ENCODE measurements at regions of chr14 and their contacts with region 1.

Region 1: GRCh38 chr14:73759714-73760597 is 45.8 kb upstream of the PNMA1 start:
- DNase-seq: peak; percentile 96
- ATAC-seq: peak; percentile 86
- H3K4me3 ChIP-seq: peak overlapping the region; percentile 59 to 83 (median 79); a peak in 5 of 6 replicates
- H3K27ac ChIP-seq: peak overlapping the region; percentile 95
- H3K4me1 ChIP-seq: peaks cover 86% of the 10 kb centered on the region
- H3K27me3 ChIP-seq: no peaks in the 10 kb centered on the region
- CTCF ChIP-seq: peak; percentile 21
- EP300 ChIP-seq: peak; percentile 6 to 57
- POLR2A ChIP-seq: peak; percentile 70 to 77; a peak in 3 of 4 replicates
- RAD21 ChIP-seq: peak; percentile 35; the same call in 1 of the 2 replicates

Region 2: GRCh38 chr14:73741386-73741875 is 18.5 kb before region 1 on chr14:
- CTCF ChIA-PET with region 1: no interaction called
- POLR2A ChIA-PET with region 1: interaction called, 26 read pairs
- in situ Hi-C with region 1: no loop called
- intact Hi-C with region 1: no loop called
- DNase-seq: peak; percentile 61
- ATAC-seq: peak; percentile 72
- H3K4me3 ChIP-seq: peak overlapping the region; percentile 37 to 60 (median 41)
- H3K27ac ChIP-seq: peak overlapping the region; percentile 61
- H3K4me1 ChIP-seq: peaks cover 70% of the 10 kb centered on the region
- H3K27me3 ChIP-seq: no peaks in the 10 kb centered on the region
- CTCF ChIP-seq: peak; percentile 19; the same call in 1 of the 2 replicates
- EP300 ChIP-seq: no peak
- POLR2A ChIP-seq: no peak
- RAD21 ChIP-seq: no peak

Region 3: GRCh38 chr14:73785873-73786695 is 26.1 kb after region 1 on chr14:
- CTCF ChIA-PET with region 1: no interaction called
- POLR2A ChIA-PET with region 1: interaction called, 115 read pairs
- in situ Hi-C with region 1: no loop called
- intact Hi-C with region 1: loop called (anchors 2 kb)
- DNase-seq: peak; percentile 95
- ATAC-seq: peak; percentile 87
- H3K4me3 ChIP-seq: peak overlapping the region; percentile 76 to 80 (median 79)
- H3K27ac ChIP-seq: peak overlapping the region; percentile 86
- H3K4me1 ChIP-seq: peaks cover 70% of the 10 kb centered on the region
- H3K27me3 ChIP-seq: no peaks in the 10 kb centered on the region; a peak in 1 of 5 replicates
- CTCF ChIP-seq: peak; percentile 36; the same call in 1 of the 2 replicates
- EP300 ChIP-seq: peak; percentile 81 to 87; a peak in 3 of 4 replicates
- POLR2A ChIP-seq: peak; percentile 84 to 86
- RAD21 ChIP-seq: peak; percentile 60

Region 4: DNA sequence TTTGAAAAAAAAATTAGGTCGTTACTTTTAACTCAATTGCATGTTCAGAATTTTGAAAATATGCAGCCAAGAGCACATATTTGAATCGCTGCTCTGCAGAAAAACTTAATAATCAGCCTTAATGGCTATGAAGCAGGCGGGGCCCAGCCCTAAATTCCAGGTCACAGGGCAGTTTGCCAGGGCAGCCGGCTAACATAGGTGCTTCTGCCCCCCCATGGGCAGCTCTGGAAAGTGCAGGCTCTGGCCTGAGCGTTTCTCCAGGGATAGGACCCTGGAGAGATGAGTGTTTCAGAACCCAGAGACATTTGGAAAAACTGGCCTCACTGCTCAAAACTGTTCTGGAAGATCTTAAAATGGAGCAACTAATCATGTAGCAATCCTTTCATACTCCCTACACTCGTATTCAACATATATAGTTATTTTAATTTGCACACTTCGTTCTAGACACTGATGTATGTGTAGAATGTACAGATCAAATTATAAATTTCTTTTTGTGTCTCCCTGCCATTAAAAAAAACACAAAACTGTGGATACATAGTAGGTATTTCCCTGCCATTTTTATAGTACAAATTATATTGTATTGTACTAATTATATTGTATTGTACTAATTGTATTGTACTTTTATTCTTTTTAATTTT is 65.7 kb after region 1 on chr14:
- CTCF ChIA-PET with region 1: no interaction called
- POLR2A ChIA-PET with region 1: no interaction called
- in situ Hi-C with region 1: loop called (anchors 10 kb)
- intact Hi-C with region 1: no loop called
- DNase-seq: peak; percentile 69
- ATAC-seq: peak; percentile 92
- H3K4me3 ChIP-seq: no peak overlapping the region
- H3K27ac ChIP-seq: no peak overlapping the region
- H3K4me1 ChIP-seq: peaks cover 15% of the 10 kb centered on the region
- H3K27me3 ChIP-seq: peaks cover 0 to 2% of the 10 kb centered on the region in 2 experiments; a peak in 2 of 5 replicates
- CTCF ChIP-seq: peak; percentile 90
- EP300 ChIP-seq: no peak
- POLR2A ChIP-seq: no peak
- RAD21 ChIP-seq: peak; percentile 94

Region 5: GRCh38 chr14:73851644-73852382 is 91.9 kb after region 1 on chr14 and contains the start of gene PTGR2:
- CTCF ChIA-PET with region 1: no interaction called
- POLR2A ChIA-PET with region 1: interaction called, 19 read pairs
- in situ Hi-C with region 1: no loop called
- intact Hi-C with region 1: no loop called
- DNase-seq: peak; percentile 97
- ATAC-seq: peak; percentile 91
- H3K4me3 ChIP-seq: peak within 1 kb of the TSS; percentile 72 to 75 (median 72)
- H3K27ac ChIP-seq: peak within 1 kb of the TSS; percentile 95
- H3K4me1 ChIP-seq: peaks cover 46% of the 10 kb centered on the region
- H3K27me3 ChIP-seq: no peaks in the 10 kb centered on the region
- CTCF ChIP-seq: no peak
- EP300 ChIP-seq: no peak; a peak in 2 of 4 replicates
- POLR2A ChIP-seq: peak; percentile 88 to 97
- RAD21 ChIP-seq: no peak; the same call in 1 of the 2 replicates
- total RNA-seq, gene PTGR2: 4.3 and 5.1 TPM in 2 replicates

Region 6: DNA sequence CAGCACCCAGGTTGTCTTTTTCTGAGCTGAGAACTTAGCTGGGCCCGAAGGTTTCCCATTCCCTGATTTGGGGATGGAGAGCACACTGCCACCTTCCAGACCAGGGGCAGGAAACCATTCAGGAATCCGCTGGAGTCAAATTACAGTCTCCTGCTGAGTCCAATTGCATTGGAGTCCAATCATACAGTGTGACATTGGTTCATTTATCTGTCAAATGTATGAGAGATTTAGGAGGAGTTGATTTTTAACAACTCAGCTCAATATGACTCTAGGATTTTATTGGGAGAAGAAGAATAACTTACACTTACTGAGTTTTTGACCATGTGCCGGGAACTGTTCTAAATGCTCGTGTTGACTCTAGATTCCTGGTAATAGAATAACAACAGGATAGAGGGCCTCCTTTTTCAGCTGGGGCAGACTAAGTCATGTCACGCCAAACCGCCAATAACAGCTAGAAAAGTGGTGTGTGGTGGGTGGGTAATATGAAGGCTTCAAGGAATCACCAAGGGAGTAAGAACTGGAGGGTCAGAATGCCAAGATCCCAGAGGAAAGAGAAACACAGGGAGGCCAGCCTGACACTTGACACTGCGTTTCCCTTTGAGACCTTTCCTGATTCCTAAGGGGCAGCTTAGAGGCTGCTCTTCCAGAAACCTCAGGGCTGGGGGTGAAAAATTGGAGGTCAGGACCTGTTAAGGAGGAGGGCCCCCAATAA is 654.6 kb after region 1 on chr14:
- CTCF ChIA-PET with region 1: no interaction called
- POLR2A ChIA-PET with region 1: no interaction called
- in situ Hi-C with region 1: no loop called
- intact Hi-C with region 1: no loop called
- DNase-seq: no peak
- ATAC-seq: no peak
- H3K4me3 ChIP-seq: no peak overlapping the region
- H3K27ac ChIP-seq: no peak overlapping the region
- H3K4me1 ChIP-seq: no peaks in the 10 kb centered on the region
- H3K27me3 ChIP-seq: peaks cover 0 to 21% of the 10 kb centered on the region in 2 experiments; a peak in 2 of 5 replicates
- CTCF ChIP-seq: no peak
- EP300 ChIP-seq: no peak
- POLR2A ChIP-seq: no peak
- RAD21 ChIP-seq: no peak

Region 7: DNA sequence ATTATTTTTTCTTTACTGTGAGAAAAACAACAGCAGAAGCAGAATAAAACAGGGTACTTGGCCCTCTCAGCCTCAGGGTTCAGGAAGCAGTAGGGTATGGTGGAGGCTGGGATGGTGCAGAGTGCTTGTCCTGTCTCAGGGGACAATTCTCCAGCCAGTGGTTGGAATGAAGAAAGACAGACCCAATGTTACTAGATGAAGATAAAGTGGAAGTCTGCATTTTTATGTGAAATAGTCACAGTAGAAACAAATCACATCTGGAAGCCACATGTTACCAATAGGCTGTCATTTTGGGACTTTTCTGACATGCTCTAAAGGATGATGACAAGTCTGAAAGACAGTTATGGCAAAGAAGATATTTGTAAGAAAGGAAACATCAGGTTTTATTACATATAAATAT is 1083.7 kb after region 1 on chr14:
- CTCF ChIA-PET with region 1: no interaction called
- POLR2A ChIA-PET with region 1: no interaction called
- in situ Hi-C with region 1: no loop called
- intact Hi-C with region 1: no loop called
- DNase-seq: no peak
- ATAC-seq: no peak
- H3K4me3 ChIP-seq: no peak overlapping the region
- H3K27ac ChIP-seq: no peak overlapping the region
- H3K4me1 ChIP-seq: peaks cover 7% of the 10 kb centered on the region
- H3K27me3 ChIP-seq: no peaks in the 10 kb centered on the region
- CTCF ChIP-seq: no peak
- EP300 ChIP-seq: no peak
- POLR2A ChIP-seq: no peak
- RAD21 ChIP-seq: no peak